ENCODE measurements at regions of chr2 and their contacts with region 1.

Region 1: DNA sequence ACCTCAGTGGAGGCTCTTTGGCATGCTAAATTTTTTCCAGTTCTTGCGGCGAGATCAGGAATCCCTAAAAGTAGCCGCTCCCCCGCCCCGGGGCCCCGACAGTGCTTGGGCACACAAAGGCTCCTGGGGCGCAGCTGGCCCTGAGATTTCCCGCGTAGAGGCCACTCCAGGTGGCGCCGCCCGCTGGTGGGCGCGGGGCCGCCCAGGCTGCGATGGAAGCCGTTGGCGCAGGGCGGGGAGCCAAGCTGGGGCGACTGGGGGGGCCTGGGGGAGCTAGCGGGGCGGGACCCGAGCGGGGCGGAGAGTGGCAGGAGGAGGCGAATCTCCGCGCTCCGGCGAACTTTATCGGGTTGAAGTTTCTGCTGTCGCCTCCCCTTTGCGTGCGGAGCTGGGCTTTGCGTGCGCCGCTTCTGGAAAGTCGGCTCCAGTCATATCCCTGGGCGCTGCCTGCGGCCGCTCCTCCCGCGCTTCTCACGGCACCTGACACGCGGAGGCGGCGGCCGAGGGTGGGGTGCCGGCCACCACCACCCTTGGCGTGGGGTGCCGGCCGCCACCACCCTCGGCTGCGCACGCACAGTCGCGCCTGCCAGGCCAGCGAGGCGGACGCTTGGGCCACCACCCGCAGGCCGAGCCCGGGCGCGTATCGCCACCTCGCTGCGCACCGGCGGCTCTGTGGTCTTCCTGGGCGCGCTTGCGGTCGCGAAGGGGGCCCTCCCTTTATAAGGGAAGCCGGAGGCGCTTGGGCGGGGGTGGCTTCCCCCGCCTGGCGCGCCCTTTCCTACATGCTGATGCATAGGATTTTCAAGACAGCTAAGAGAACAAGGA is 867 bp upstream of the CYP1B1 start:
- DNase-seq: no peak
- ATAC-seq: peak; percentile 71
- H3K4me3 ChIP-seq: peak overlapping the region; percentile 58 to 77
- H3K27ac ChIP-seq: peak overlapping the region; percentile 92
- H3K4me1 ChIP-seq: peaks cover 20% of the 10 kb centered on the region
- H3K27me3 ChIP-seq: no peaks in the 10 kb centered on the region
- CTCF ChIP-seq: peak; percentile 88

Region 2: DNA sequence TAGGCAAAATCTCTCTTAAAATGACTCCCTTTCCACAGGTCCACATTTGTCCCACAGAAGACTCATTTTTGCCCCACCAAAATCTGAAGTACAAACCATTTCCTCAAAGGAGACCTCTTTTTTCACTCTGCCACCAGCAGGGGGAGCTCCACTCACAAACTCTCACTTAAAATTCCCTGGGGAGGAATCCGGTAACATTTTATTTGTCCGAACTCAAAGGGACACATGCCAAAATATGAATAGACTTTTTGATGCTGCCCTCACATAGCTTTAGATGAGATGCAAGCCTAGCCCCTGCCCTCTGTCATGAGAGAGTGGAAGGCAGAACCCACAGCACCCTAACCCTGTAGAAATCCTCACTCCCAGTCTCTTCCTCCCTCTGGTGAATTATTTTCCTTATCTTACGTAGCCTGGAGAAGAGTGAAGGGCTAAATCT is 94.7 kb before region 1 on chr2:
- CTCF ChIA-PET with region 1: interaction called, 4 read pairs
- POLR2A ChIA-PET with region 1: no interaction called
- in situ Hi-C with region 1: no loop called
- intact Hi-C with region 1: loop called (anchors 5 kb)
- DNase-seq: peak; percentile 47
- ATAC-seq: peak; percentile 84
- H3K4me3 ChIP-seq: peak overlapping the region; percentile 14 to 29; a peak in 2 of 4 replicates
- H3K27ac ChIP-seq: peak overlapping the region; percentile 45; the same call in 1 of the 2 replicates
- H3K4me1 ChIP-seq: peaks cover 5% of the 10 kb centered on the region; the same call in 1 of the 2 replicates
- H3K27me3 ChIP-seq: no peaks in the 10 kb centered on the region
- CTCF ChIP-seq: peak; percentile 90

Region 3: GRCh38 chr2:38026846-38027245 is 50.0 kb before region 1 on chr2:
- CTCF ChIA-PET with region 1: no interaction called
- POLR2A ChIA-PET with region 1: no interaction called
- in situ Hi-C with region 1: no loop called
- intact Hi-C with region 1: no loop called
- DNase-seq: no peak
- ATAC-seq: no peak
- H3K4me3 ChIP-seq: no peak overlapping the region
- H3K27ac ChIP-seq: no peak overlapping the region
- H3K4me1 ChIP-seq: no peaks in the 10 kb centered on the region
- H3K27me3 ChIP-seq: peaks cover 6% of the 10 kb centered on the region; the same call in 1 of the 2 replicates
- CTCF ChIP-seq: no peak

Region 4: GRCh38 chr2:38095996-38096861 is 19.4 kb after region 1 on chr2:
- CTCF ChIA-PET with region 1: interaction called, 13 read pairs
- POLR2A ChIA-PET with region 1: interaction called, 10 read pairs
- in situ Hi-C with region 1: no loop called
- intact Hi-C with region 1: no loop called
- DNase-seq: no peak
- ATAC-seq: peak; percentile 80
- H3K4me3 ChIP-seq: peak overlapping the region; percentile 10 to 50
- H3K27ac ChIP-seq: peak overlapping the region; percentile 98
- H3K4me1 ChIP-seq: peaks cover 76% of the 10 kb centered on the region
- H3K27me3 ChIP-seq: no peaks in the 10 kb centered on the region
- CTCF ChIP-seq: no peak

Region 5: DNA sequence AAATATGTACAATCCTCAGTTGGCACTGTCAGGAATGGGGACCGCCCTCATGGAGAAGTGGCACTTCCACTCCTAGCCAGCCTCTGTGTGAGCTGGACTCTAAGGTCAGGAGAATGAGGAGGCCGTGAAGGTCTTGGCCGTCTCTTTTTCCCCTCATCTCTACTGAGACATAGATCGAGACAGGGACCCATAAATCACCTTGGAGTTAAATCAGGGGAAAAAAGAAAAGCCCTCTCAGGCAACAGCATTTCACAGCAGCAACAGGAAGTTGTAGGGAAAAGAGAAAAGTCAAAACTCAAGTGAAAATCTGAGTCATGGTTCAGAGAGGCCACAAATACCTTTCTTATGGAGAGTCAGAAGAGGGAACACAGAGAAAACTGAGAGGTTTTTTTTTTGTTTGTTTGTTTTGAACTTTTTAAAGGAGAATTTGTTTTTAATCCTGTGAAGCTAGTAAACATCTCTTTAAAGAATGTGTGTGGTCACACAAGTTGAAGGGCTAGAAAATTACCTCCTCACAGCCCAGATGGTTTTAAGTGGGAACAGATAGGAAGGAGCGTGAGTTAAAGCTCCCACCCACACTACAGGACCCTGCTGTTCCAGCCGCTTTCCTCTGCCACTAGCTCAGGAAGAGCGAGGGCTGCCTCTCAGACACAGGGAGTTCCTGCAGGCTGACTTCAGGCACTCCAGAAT is 29.7 kb after region 1 on chr2:
- CTCF ChIA-PET with region 1: interaction called, 34 read pairs
- POLR2A ChIA-PET with region 1: interaction called, 4 read pairs
- in situ Hi-C with region 1: no loop called
- intact Hi-C with region 1: no loop called
- DNase-seq: no peak
- ATAC-seq: peak; percentile 67
- H3K4me3 ChIP-seq: peak overlapping the region in 1 of 2 experiments; percentile 19; a peak in 2 of 4 replicates
- H3K27ac ChIP-seq: peak overlapping the region; percentile 95
- H3K4me1 ChIP-seq: peaks cover 35% of the 10 kb centered on the region
- H3K27me3 ChIP-seq: no peaks in the 10 kb centered on the region
- CTCF ChIP-seq: no peak

Region 6: GRCh38 chr2:38115216-38116032 is 38.6 kb after region 1 on chr2:
- CTCF ChIA-PET with region 1: interaction called, 30 read pairs
- POLR2A ChIA-PET with region 1: interaction called, 6 read pairs
- in situ Hi-C with region 1: no loop called
- intact Hi-C with region 1: loop called (anchors 2 kb)
- DNase-seq: peak; percentile 69
- ATAC-seq: peak; percentile 98
- H3K4me3 ChIP-seq: no peak overlapping the region
- H3K27ac ChIP-seq: peak overlapping the region; percentile 48; the same call in 1 of the 2 replicates
- H3K4me1 ChIP-seq: peaks cover 20% of the 10 kb centered on the region; the same call in 1 of the 2 replicates
- H3K27me3 ChIP-seq: no peaks in the 10 kb centered on the region
- CTCF ChIP-seq: peak; percentile 99

Region 7: GRCh38 chr2:38171208-38171858 is 94.5 kb after region 1 on chr2:
- CTCF ChIA-PET with region 1: no interaction called
- POLR2A ChIA-PET with region 1: no interaction called
- in situ Hi-C with region 1: no loop called
- intact Hi-C with region 1: no loop called
- DNase-seq: no peak
- ATAC-seq: no peak
- H3K4me3 ChIP-seq: no peak overlapping the region
- H3K27ac ChIP-seq: no peak overlapping the region
- H3K4me1 ChIP-seq: no peaks in the 10 kb centered on the region
- H3K27me3 ChIP-seq: no peaks in the 10 kb centered on the region
- CTCF ChIP-seq: no peak

Region 8: DNA sequence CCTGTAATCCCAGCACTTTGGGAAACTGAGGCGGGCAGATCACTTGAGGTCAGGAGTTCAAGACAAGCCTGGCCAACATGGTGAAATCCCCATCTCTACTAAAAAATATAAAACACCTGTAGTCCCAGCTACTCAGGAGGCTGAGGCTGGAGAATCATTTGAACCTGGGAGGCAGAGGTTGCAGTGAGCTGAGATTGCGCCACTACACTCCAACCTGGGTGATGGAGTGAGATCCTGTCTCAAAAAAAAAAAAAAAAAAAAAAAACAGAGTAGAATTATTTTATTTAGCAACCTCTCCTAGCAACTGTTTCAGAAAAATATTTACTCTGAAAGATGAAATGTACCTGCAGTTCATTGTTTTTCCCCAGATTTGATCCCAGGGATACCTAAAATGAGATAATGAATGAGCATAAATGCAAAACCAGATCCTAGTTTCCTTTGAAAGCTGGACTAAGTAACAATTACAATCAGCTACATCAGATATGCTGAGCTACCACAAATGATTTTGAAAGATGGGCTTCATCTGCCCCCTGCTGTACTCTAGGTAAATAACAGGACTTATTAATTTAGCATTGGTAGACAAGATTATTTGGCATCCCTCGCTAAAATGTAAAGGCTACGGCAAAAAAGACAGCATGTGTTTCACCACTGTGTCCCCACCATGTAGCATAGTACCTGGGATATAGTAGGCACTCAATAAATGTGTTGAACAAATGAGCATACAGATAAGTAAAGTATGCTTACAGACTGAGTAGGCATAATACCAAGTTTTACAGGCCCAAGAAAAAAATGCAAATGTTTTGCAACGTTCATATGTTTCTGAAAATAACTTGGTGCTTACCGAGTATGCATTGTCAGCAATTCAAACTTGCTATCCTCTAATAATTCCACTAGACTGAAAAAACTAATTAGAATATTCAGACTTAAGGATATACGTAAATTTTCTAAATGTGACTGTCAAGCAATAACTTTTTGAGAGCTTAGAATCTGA is 197.8 kb after region 1 on chr2:
- CTCF ChIA-PET with region 1: interaction called, 23 read pairs
- POLR2A ChIA-PET with region 1: interaction called, 3 read pairs
- in situ Hi-C with region 1: no loop called
- intact Hi-C with region 1: loop called (anchors 2 kb)
- DNase-seq: peak; percentile 59
- ATAC-seq: peak; percentile 94
- H3K4me3 ChIP-seq: no peak overlapping the region
- H3K27ac ChIP-seq: no peak overlapping the region; the same call in 1 of the 2 replicates
- H3K4me1 ChIP-seq: no peaks in the 10 kb centered on the region
- H3K27me3 ChIP-seq: no peaks in the 10 kb centered on the region
- CTCF ChIP-seq: peak; percentile 67; the same call in 1 of the 2 replicates

Region 9: DNA sequence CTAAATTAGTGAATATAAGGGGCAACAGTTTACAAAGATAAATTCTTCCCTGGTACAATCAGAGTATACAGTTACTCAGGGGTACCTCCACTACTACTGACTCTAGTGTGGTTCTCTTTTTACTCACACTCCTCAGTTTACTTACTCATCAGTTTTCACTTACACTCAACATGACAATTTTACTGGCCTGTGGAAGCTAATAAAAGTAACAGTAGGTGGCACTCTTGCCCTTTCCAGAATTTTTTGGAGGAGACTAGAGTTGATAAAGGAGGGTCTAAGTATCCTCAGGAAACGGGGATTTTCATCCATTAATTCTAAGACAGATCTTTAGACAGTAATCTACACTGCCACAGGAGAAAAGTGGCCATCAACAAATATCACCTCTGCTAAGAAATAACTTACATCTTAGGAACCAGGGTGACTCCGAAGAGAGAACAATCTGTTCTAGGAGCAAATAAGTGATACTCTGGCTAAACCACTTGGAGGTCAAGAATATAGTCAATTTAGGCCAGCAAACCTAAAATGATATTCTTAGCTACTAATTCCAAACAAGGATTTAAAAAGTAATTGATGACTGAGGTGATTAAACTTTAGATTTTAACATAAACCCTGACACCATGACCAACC is 239.0 kb after region 1 on chr2:
- CTCF ChIA-PET with region 1: interaction called, 11 read pairs
- POLR2A ChIA-PET with region 1: no interaction called
- in situ Hi-C with region 1: no loop called
- intact Hi-C with region 1: no loop called
- DNase-seq: peak; percentile 30
- ATAC-seq: peak; percentile 88
- H3K4me3 ChIP-seq: no peak overlapping the region
- H3K27ac ChIP-seq: no peak overlapping the region
- H3K4me1 ChIP-seq: no peaks in the 10 kb centered on the region
- H3K27me3 ChIP-seq: no peaks in the 10 kb centered on the region
- CTCF ChIP-seq: peak; percentile 74; the same call in 1 of the 2 replicates